ENCODE measurements at regions of chr6 and their contacts with region 1.

Region 1: DNA sequence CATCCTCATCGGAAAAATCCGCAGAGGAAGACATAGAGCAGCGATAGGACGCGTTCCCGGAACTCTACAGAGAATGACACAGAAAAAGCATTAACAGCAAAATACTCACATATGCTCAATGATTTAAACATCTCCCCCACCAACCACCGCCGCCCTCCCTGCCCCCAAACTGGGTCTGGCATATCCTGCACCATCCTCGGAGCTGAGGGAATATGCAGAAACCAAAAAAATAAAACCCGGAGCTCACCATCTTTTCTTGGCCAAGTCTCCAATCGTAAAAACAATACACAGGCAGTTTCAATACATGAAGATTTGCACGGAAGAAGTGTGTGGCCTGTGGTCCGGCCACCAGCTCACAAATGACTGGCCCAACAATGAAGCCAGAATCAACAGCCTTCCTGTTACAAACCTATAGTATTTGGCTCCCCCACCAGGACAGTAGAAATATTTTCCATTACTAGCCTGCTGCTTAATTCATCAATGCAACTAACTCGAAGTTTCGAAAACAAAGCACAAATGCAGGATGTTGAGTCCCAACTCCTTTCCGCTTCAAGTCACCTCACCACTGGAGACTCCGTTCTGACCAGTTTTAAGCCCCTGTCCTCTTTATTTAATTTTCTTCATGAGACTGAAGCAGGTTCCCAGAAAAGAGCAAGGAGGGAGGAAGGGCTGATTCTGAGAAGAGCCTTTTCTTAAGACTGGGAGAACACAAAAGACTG is 103.2 kb upstream of the BEND6 start:
- H3K4me3 ChIP-seq: peak overlapping the region; percentile 43
- H3K27ac ChIP-seq: no peak overlapping the region
- H3K4me1 ChIP-seq: peaks cover 18% of the 10 kb centered on the region
- CTCF ChIP-seq: peak; percentile 57; the same call in 1 of the 2 replicates

Region 2: GRCh38 chr6:56699066-56699654 is 152.5 kb before region 1 on chr6:
- CTCF ChIA-PET with region 1: interaction called, 10 read pairs
- POLR2A ChIA-PET with region 1: no interaction called
- H3K4me3 ChIP-seq: no peak overlapping the region
- H3K27ac ChIP-seq: no peak overlapping the region
- H3K4me1 ChIP-seq: no peaks in the 10 kb centered on the region
- CTCF ChIP-seq: no peak

Region 3: GRCh38 chr6:56757588-56757984 is 94.1 kb before region 1 on chr6:
- CTCF ChIA-PET with region 1: interaction called, 12 read pairs
- POLR2A ChIA-PET with region 1: no interaction called
- H3K4me3 ChIP-seq: no peak overlapping the region
- H3K27ac ChIP-seq: no peak overlapping the region
- H3K4me1 ChIP-seq: peaks cover 11% of the 10 kb centered on the region; the same call in 1 of the 2 replicates
- CTCF ChIP-seq: peak; percentile 44; the same call in 1 of the 2 replicates

Region 4: GRCh38 chr6:56862415-56863175 is 10.9 kb after region 1 on chr6:
- CTCF ChIA-PET with region 1: interaction called, 94 read pairs
- POLR2A ChIA-PET with region 1: no interaction called
- H3K4me3 ChIP-seq: no peak overlapping the region
- H3K27ac ChIP-seq: no peak overlapping the region
- H3K4me1 ChIP-seq: peaks cover 25% of the 10 kb centered on the region
- CTCF ChIP-seq: no peak